Ascending aorta (tissue), 2 donors: ENCODE measurements at regions of chr12 and their contacts with region 1.

Region 1: DNA sequence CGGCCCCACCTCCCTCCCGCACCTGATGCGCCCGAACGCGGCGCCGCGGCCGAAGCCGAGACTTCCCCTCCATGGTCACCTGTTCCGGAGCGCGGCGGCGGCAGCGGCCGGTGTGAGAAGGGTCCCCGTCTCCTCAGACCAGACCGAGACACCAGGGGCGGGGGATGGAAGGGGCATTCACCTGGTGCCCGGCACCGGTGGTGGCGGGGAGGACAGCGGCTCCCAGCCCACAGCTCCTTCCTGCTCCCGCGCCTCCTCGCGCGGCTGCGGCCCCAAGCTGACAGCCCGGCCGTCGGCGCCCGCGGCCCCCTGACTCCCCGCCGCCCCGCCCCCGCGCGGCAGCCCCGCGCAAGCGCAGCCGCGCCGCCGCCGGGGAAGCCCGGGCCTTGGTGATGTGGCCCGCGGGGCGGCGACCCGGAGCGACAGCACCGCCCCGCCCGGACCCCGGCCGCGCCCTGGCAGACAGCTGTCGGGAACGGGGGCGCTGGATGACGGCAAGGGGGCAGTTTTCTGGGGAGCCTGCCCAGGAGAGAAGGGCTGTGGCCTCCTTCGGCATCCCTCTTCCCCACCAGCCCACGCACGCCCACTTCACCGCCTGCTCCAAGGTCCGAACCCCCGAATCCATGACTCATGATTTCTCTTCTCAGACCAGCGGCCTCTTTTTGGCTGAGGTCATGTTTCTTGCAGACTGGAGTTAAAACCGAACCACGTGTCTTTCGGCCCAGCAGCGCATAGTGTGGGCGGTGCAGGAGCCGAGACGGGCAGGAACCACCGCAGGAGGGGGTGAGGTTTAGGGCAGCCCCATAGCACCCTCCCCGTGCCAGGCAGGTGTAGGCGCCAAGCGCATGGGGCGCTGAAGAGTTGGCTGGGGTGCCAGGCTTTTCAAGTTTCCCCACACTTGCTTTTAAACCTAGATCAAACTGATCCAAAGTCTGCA is at the start of gene SLC41A2:
- DNase-seq: peak; percentile 83 to 94
- H3K4me3 ChIP-seq: peak within 1 kb of the TSS; percentile 69 to 88
- H3K27ac ChIP-seq: peak within 1 kb of the TSS; percentile 92 to 96
- H3K4me1 ChIP-seq: peaks cover 0 to 18% of the 10 kb centered on the region in 2 donors
- H3K27me3 ChIP-seq: no peaks in the 10 kb centered on the region
- CTCF ChIP-seq: peak in 2 of 3 experiments; percentile 11 to 57
- total RNA-seq, gene SLC41A2: 15.6 TPM

Region 2: DNA sequence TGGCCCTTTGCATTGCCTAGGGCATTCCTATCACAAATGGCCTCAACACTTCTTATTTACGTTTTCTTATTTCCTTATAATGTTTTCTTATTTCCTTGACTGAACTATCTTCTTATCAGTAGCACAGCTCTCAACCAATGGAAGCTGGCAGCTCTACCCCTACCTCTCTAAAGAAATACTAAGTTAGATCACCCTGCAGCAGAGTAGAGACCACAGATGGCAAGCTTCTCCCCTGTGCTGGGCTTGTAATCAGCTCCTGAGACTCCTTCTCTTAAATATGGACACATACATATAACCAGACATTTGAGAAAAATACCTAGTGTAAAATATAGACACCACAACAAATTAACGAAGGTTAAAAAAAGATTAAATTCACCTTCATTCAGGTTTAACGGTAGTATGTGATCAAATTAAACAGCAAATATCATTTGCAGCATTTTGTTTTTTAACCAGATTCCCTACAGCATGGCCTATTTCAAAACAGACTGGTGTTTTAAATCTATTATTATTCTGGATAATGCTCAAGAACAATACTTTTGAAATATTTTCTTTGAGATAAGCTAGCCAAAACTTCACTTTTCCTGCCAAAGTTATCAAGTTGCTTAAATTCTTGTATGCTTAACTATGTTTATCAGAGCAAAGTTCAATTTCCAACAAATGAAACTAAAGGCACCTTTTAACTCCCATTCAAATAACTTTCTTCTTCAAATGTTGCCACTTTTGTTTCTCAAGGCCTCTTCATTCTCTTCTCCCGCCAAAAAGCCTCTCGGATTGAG is 54.4 kb before region 1 on chr12:
- intact Hi-C with region 1: loop called (anchors 5 kb)
- DNase-seq: no peak
- H3K4me3 ChIP-seq: peak overlapping the region in 1 of 2 donors; percentile 25
- H3K27ac ChIP-seq: peak overlapping the region; percentile 55 to 57
- H3K4me1 ChIP-seq: peaks cover 10 to 55% of the 10 kb centered on the region in 2 donors
- H3K27me3 ChIP-seq: no peaks in the 10 kb centered on the region
- CTCF ChIP-seq: no peak

Region 3: DNA sequence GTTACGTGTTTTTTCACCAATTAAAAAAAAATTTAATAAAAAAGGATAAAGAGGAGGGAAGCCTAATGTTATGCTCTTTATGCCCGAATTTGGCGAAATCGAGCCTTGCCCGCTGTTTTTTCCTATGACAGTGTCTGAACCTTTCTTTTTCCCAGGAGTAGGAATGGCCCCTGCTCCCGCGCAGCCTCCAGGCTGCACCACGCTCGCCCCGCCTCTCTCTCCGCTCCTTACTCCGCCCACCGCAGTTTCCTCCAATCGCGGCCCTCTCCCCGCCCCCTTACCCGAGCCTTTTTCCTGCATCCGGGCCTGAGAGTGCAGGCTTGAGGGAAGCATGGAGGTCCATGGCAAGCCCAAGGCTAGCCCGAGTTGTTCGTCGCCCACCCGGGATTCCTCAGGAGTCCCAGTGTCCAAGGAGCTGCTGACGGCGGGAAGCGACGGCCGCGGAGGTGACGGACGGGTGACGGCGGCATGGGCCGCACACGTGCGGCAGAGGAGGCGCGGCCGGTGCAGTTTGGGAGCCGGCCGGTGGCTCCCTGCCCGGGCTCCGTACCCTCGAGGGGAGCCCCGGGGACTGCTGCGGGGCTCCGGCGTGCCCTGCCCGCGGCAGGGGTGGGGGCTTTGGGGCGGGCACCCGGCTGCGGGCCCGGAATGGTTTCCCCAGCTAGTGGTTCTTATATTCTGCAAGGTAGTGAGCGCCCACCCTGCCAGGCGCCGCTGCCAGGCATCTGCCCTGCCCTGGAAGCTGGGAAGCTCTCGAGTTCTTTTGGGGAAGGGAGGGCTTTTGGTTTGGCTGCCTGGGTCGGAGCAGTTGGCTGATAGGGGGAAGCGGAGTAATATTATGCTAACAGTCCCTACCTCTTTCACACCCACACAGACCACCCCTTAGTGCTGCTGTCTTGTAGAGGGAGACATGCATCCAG is 28.0 kb after region 1 on chr12 and contains the start of gene NOPCHAP1:
- intact Hi-C with region 1: loop called (anchors 1 kb)
- DNase-seq: peak; percentile 75 to 97
- H3K4me3 ChIP-seq: peak within 1 kb of the TSS; percentile 72 to 76
- H3K27ac ChIP-seq: peak within 1 kb of the TSS; percentile 52 to 58
- H3K4me1 ChIP-seq: peaks cover 5 to 17% of the 10 kb centered on the region in 2 donors
- H3K27me3 ChIP-seq: no peaks in the 10 kb centered on the region
- CTCF ChIP-seq: no peak
- total RNA-seq, gene NOPCHAP1: 31.9 TPM

Region 4: DNA sequence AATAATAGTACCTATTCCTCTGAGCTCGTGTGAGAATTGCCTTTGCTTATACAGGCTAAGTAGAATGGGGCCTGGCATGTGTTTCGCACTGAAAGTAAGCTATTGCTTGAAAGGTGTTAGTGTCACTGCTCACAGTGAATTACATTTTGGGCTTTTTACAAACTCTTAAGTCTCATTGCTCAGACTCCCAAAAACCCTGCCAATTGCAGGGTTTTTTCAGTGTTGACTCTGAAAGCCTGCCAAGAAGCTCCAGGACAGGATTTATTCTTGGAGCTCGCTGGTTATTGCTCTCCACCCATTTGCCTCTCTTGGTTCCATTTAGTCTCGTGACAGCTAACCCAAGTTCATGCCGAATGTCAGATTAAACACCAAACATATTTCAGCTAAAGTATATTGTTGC is 67.6 kb after region 1 on chr12:
- intact Hi-C with region 1: loop called (anchors 2 kb)
- DNase-seq: peak; percentile 23 to 88
- H3K4me3 ChIP-seq: no peak overlapping the region
- H3K27ac ChIP-seq: peak overlapping the region; percentile 63 to 81
- H3K4me1 ChIP-seq: peaks cover 3 to 22% of the 10 kb centered on the region in 2 donors
- H3K27me3 ChIP-seq: no peaks in the 10 kb centered on the region
- CTCF ChIP-seq: no peak

Region 5: DNA sequence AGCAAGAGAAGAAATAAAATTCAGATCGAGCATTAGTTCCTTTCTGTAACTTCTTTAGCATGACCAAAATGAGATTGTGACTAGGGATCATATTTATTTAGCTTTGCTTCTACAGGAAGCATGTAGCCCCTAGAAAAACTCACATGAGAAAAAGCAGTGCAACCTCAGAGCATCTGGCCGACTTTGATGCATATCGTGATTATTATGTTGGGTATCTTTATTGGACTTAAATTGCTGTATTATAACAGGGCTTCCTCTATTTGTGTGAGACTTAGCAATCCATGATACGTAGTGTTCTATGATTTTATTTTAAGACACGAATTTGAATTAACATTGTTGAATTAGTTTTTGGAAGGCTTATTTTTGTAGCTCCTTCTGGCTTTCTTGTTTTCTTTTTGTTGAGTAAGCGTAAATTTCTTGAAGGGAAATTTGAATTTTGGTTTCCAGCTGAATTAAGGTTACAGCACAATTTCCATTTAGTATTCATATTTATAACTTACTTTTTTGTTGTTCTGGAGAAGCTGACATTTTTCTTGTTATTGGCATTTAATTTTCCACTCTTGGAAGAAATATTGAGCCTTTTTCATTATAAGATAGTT is 183.1 kb after region 1 on chr12:
- intact Hi-C with region 1: no loop called
- DNase-seq: no peak
- H3K4me3 ChIP-seq: no peak overlapping the region
- H3K27ac ChIP-seq: no peak overlapping the region
- H3K4me1 ChIP-seq: no peaks in the 10 kb centered on the region
- H3K27me3 ChIP-seq: no peaks in the 10 kb centered on the region
- CTCF ChIP-seq: no peak